Mammary epithelial cell (primary cell): ENCODE measurements at regions of chr22 and their contacts with region 1.

Region 1: GRCh38 chr22:31943976-31944699 is at the start of gene YWHAH:
- DNase-seq: peak; percentile 91
- H3K4me3 ChIP-seq: peak within 1 kb of the TSS; percentile 81 to 92 (median 91)
- H3K27ac ChIP-seq: peak within 1 kb of the TSS; percentile 86
- H3K4me1 ChIP-seq: peaks cover 21% of the 10 kb centered on the region
- H3K27me3 ChIP-seq: no peaks in the 10 kb centered on the region
- CTCF ChIP-seq: no peak
- total RNA-seq, gene YWHAH: 153 to 166 TPM

Region 2: GRCh38 chr22:31754813-31755212 is 189.3 kb before region 1 on chr22:
- CTCF ChIA-PET with region 1: interaction called, 22 read pairs
- dilution Hi-C with region 1: no loop called
- in situ Hi-C with region 1: no loop called
- intact Hi-C with region 1: loop called (anchors 2 kb)
- DNase-seq: no peak
- H3K4me3 ChIP-seq: peak overlapping the region; percentile 82 to 94 (median 87)
- H3K27ac ChIP-seq: peak overlapping the region; percentile 91
- H3K4me1 ChIP-seq: peaks cover 26% of the 10 kb centered on the region
- H3K27me3 ChIP-seq: no peaks in the 10 kb centered on the region
- CTCF ChIP-seq: no peak

Region 3: DNA sequence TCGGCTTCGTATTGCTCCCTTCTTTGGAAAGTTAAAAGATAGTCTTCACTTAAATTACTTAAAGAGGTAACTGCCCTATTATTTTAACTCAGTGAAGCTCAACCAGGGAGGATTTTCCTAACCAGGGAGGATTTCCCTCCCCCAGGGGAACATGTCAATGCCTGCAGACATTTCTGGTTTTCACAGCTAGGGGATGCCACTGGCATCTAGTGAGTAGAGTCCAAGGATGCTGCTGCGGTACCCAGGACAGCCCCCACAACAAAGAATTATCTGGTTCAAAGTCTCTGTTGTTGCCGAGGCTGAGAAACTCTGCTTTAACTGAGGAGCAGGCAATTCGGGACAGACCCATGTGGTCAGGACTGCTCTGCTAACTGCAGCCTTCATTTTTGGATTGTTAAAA is 108.1 kb before region 1 on chr22:
- CTCF ChIA-PET with region 1: no interaction called
- dilution Hi-C with region 1: no loop called
- in situ Hi-C with region 1: no loop called
- intact Hi-C with region 1: loop called (anchors 10 kb)
- DNase-seq: no peak
- H3K4me3 ChIP-seq: no peak overlapping the region
- H3K27ac ChIP-seq: no peak overlapping the region
- H3K4me1 ChIP-seq: peaks cover 26% of the 10 kb centered on the region
- H3K27me3 ChIP-seq: no peaks in the 10 kb centered on the region
- CTCF ChIP-seq: peak in 1 of 2 donors; percentile 14

Region 4: GRCh38 chr22:31870890-31871289 is 73.2 kb before region 1 on chr22:
- CTCF ChIA-PET with region 1: no interaction called
- dilution Hi-C with region 1: no loop called
- in situ Hi-C with region 1: no loop called
- intact Hi-C with region 1: loop called (anchors 1 kb)
- DNase-seq: peak; percentile 93
- H3K4me3 ChIP-seq: no peak overlapping the region
- H3K27ac ChIP-seq: peak overlapping the region; percentile 59
- H3K4me1 ChIP-seq: peaks cover 27% of the 10 kb centered on the region
- H3K27me3 ChIP-seq: no peaks in the 10 kb centered on the region
- CTCF ChIP-seq: peak in 1 of 2 donors; percentile 63

Region 5: DNA sequence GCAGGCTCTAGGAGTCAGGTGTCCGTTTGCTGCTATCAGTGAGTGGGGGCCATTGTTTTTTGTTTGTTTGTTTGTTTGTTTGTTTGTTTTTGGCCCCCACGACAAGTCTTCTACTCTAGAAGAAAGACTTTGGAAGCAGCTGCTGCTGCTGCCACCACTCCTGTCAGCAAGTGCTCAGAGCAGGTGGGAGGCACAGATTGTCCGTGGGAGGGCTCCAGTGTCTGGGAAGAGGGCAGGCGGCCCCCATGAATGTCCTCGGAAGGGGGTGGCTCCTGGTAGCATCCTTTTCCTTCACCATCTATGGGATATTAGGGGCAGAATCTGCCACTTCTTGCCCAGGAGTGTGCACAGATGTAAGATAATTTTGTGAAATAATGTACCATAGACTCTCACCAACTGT is 37.6 kb before region 1 on chr22:
- CTCF ChIA-PET with region 1: no interaction called
- dilution Hi-C with region 1: loop called (anchors 5 kb)
- in situ Hi-C with region 1: no loop called
- intact Hi-C with region 1: no loop called
- DNase-seq: no peak
- H3K4me3 ChIP-seq: no peak overlapping the region
- H3K27ac ChIP-seq: no peak overlapping the region
- H3K4me1 ChIP-seq: no peaks in the 10 kb centered on the region
- H3K27me3 ChIP-seq: no peaks in the 10 kb centered on the region
- CTCF ChIP-seq: no peak